Caco-2 (cell line): ENCODE measurements at regions of chr1 and their contacts with region 1.

Region 1: GRCh38 chr1:6245086-6245868 is 1.3 kb downstream of the HES3 start:
- DNase-seq: peak; percentile 65 to 86
- H3K4me3 ChIP-seq: peak overlapping the region; percentile 36
- H3K4me3 Mint-ChIP-seq: peak overlapping the region; percentile 62
- H3K27ac Mint-ChIP-seq: no peak overlapping the region
- H3K4me1 ChIP-seq: 0 out of 2 replicates have a peak, but pooled peaks cover 10% of the 10 kb centered on the region
- H3K4me1 Mint-ChIP-seq: peaks cover 5% of the 10 kb centered on the region
- H3K27me3 ChIP-seq: no peaks in the 10 kb centered on the region
- H3K27me3 Mint-ChIP-seq: peaks cover 7% of the 10 kb centered on the region
- CTCF ChIP-seq: peak; percentile 66 to 88

Region 2: GRCh38 chr1:6052543-6053205 is 192.6 kb before region 1 on chr1:
- CTCF ChIA-PET with region 1: interaction called, 15 read pairs
- POLR2A ChIA-PET with region 1: no interaction called
- intact Hi-C with region 1: no loop called
- DNase-seq: peak in 1 of 2 experiments; percentile 72
- H3K4me3 ChIP-seq: no peak overlapping the region
- H3K4me3 Mint-ChIP-seq: no peak overlapping the region
- H3K27ac Mint-ChIP-seq: no peak overlapping the region
- H3K4me1 ChIP-seq: no peaks in the 10 kb centered on the region
- H3K4me1 Mint-ChIP-seq: no peaks in the 10 kb centered on the region
- H3K27me3 ChIP-seq: no peaks in the 10 kb centered on the region
- H3K27me3 Mint-ChIP-seq: no peaks in the 10 kb centered on the region
- CTCF ChIP-seq: peak; percentile 41 to 52

Region 3: DNA sequence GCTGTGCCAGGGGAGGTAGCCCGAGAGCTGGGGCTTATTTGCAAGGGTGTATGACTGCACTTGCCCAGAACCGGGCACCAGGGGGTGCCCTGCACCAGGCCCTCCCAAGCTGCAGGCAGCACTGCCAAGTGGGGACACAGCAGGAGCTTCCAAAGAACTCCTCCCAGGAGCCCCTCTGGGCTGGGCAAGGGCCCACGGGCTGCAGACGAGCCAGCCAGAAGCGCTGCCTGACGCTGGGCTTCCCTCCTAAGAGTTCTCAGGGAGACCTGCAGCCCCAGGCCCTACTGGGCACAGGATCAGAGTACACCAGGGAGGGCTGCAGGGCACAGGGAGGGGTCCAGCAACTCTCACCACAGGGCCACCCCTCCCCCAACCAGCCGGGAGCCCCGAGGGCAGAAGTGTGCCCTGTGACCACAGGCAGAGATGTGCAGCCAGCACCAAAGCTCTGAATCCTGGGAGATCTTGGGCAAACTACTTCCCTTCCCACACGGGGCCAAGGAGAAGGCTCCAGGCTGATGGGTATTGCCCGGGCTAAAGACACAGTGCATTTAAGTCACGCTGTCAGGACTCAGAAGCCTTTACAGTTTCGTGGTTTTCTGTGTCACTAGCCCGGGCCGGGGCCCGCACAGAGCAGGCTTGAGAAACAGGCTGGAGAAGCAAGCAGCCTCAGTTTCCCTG is 136.2 kb before region 1 on chr1:
- CTCF ChIA-PET with region 1: interaction called, 3 read pairs
- POLR2A ChIA-PET with region 1: no interaction called
- intact Hi-C with region 1: loop called (anchors 2 kb)
- DNase-seq: peak in 1 of 2 experiments; percentile 35
- H3K4me3 ChIP-seq: no peak overlapping the region
- H3K4me3 Mint-ChIP-seq: no peak overlapping the region
- H3K27ac Mint-ChIP-seq: no peak overlapping the region
- H3K4me1 ChIP-seq: no peaks in the 10 kb centered on the region
- H3K4me1 Mint-ChIP-seq: no peaks in the 10 kb centered on the region
- H3K27me3 ChIP-seq: no peaks in the 10 kb centered on the region
- H3K27me3 Mint-ChIP-seq: peaks cover 8% of the 10 kb centered on the region
- CTCF ChIP-seq: peak in 1 of 2 experiments; percentile 46

Region 4: GRCh38 chr1:6401673-6402072 is 156.4 kb after region 1 on chr1:
- CTCF ChIA-PET with region 1: interaction called, 5 read pairs
- POLR2A ChIA-PET with region 1: interaction called, 10 read pairs
- intact Hi-C with region 1: loop called (anchors 1 kb)
- DNase-seq: no peak
- H3K4me3 ChIP-seq: no peak overlapping the region
- H3K4me3 Mint-ChIP-seq: no peak overlapping the region
- H3K27ac Mint-ChIP-seq: no peak overlapping the region
- H3K4me1 ChIP-seq: no peaks in the 10 kb centered on the region
- H3K4me1 Mint-ChIP-seq: peaks cover 5% of the 10 kb centered on the region
- H3K27me3 ChIP-seq: no peaks in the 10 kb centered on the region
- H3K27me3 Mint-ChIP-seq: no peaks in the 10 kb centered on the region
- CTCF ChIP-seq: no peak

Region 5: GRCh38 chr1:6489799-6490180 is 244.5 kb after region 1 on chr1:
- CTCF ChIA-PET with region 1: interaction called, 3 read pairs
- POLR2A ChIA-PET with region 1: no interaction called
- intact Hi-C with region 1: loop called (anchors 5 kb)
- DNase-seq: peak; percentile 80 to 86
- H3K4me3 ChIP-seq: peak overlapping the region; percentile 53
- H3K4me3 Mint-ChIP-seq: peak overlapping the region; percentile 88
- H3K27ac Mint-ChIP-seq: no peak overlapping the region
- H3K4me1 ChIP-seq: peaks cover 10% of the 10 kb centered on the region; the same call in 1 of the 2 replicates
- H3K4me1 Mint-ChIP-seq: peaks cover 9% of the 10 kb centered on the region
- H3K27me3 ChIP-seq: no peaks in the 10 kb centered on the region
- H3K27me3 Mint-ChIP-seq: no peaks in the 10 kb centered on the region
- CTCF ChIP-seq: peak; percentile 87 to 93